ENCODE measurements at regions of chr3 and their contacts with region 1.

Region 1: DNA sequence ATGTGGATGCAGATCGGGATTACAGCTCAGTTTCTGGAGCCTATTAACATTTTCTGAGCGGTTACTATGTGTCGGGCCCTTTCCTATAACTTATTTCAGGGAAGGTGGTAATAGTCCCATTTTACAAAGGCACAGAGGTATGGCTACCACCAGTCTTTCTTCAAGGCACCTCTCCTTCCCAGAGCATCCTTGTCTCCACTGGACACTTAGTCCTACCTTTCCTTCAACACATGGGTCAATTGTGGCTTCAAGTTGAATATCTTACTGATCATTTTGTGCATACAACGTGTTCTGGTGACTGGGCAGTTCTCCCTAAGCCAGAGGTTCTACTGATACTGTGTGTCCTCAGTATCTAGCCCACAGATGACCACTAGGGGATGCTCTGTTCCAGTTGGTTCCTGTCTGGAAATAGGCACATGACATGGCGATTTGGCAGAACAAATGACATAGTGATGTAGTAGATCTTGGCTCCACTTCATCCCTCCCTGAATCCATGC is 60.7 kb upstream of the CMTM8 start:
- DNase-seq: peak; percentile 82
- H3K4me3 Mint-ChIP-seq: peak overlapping the region; percentile 51
- H3K27ac Mint-ChIP-seq: no peak overlapping the region
- H3K4me1 Mint-ChIP-seq: peaks cover 10% of the 10 kb centered on the region
- H3K27me3 Mint-ChIP-seq: no peaks in the 10 kb centered on the region

Region 2: GRCh38 chr3:31858439-31858838 is 319.3 kb before region 1 on chr3:
- CTCF ChIA-PET with region 1: no interaction called
- intact Hi-C with region 1: no loop called
- DNase-seq: peak; percentile 14
- H3K4me3 Mint-ChIP-seq: no peak overlapping the region
- H3K27ac Mint-ChIP-seq: no peak overlapping the region
- H3K4me1 Mint-ChIP-seq: no peaks in the 10 kb centered on the region
- H3K27me3 Mint-ChIP-seq: peaks cover 7% of the 10 kb centered on the region

Region 3: GRCh38 chr3:32285891-32286290 is 108.1 kb after region 1 on chr3:
- CTCF ChIA-PET with region 1: interaction called, 25 read pairs
- intact Hi-C with region 1: loop called (anchors 1 kb)
- DNase-seq: peak; percentile 20
- H3K4me3 Mint-ChIP-seq: peak overlapping the region; percentile 11
- H3K27ac Mint-ChIP-seq: peak overlapping the region; percentile 38
- H3K4me1 Mint-ChIP-seq: peaks cover 40% of the 10 kb centered on the region
- H3K27me3 Mint-ChIP-seq: no peaks in the 10 kb centered on the region

Region 4: DNA sequence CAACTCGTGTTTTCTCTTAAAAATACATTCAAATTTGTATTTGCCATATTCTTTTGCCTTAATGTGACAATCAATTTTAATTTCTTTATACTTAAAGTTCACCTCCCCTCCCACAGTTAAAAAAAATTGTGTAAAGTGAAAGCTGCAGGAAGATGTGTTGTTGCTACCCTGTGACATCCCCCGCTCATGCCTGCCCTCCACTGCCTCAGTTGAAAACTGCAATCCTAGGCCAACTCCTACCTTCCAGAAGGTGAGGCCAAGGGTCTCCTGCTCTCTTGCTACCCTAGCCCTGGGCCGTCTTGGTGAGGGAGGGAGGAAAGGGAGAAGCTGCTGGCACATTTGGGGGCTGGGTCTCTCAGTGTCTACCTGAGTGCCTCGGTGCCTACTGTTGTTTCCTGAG is 156.9 kb after region 1 on chr3:
- CTCF ChIA-PET with region 1: interaction called, 45 read pairs
- intact Hi-C with region 1: loop called (anchors 1 kb)
- DNase-seq: peak; percentile 83
- H3K4me3 Mint-ChIP-seq: no peak overlapping the region
- H3K27ac Mint-ChIP-seq: peak overlapping the region; percentile 19
- H3K4me1 Mint-ChIP-seq: peaks cover 44% of the 10 kb centered on the region
- H3K27me3 Mint-ChIP-seq: no peaks in the 10 kb centered on the region

Region 5: GRCh38 chr3:32401556-32402081 is 223.9 kb after region 1 on chr3:
- CTCF ChIA-PET with region 1: interaction called, 6 read pairs
- intact Hi-C with region 1: loop called (anchors 1 kb)
- DNase-seq: peak; percentile 77
- H3K4me3 Mint-ChIP-seq: peak overlapping the region; percentile 92
- H3K27ac Mint-ChIP-seq: peak overlapping the region; percentile 99
- H3K4me1 Mint-ChIP-seq: peaks cover 74% of the 10 kb centered on the region
- H3K27me3 Mint-ChIP-seq: no peaks in the 10 kb centered on the region

Region 6: GRCh38 chr3:32584660-32585059 is 406.9 kb after region 1 on chr3:
- CTCF ChIA-PET with region 1: interaction called, 5 read pairs
- intact Hi-C with region 1: loop called (anchors 5 kb)
- DNase-seq: no peak
- H3K4me3 Mint-ChIP-seq: no peak overlapping the region
- H3K27ac Mint-ChIP-seq: no peak overlapping the region
- H3K4me1 Mint-ChIP-seq: no peaks in the 10 kb centered on the region
- H3K27me3 Mint-ChIP-seq: no peaks in the 10 kb centered on the region